H1 (cell line): ENCODE measurements at regions of chr20 and their contacts with region 1.

Region 1: DNA sequence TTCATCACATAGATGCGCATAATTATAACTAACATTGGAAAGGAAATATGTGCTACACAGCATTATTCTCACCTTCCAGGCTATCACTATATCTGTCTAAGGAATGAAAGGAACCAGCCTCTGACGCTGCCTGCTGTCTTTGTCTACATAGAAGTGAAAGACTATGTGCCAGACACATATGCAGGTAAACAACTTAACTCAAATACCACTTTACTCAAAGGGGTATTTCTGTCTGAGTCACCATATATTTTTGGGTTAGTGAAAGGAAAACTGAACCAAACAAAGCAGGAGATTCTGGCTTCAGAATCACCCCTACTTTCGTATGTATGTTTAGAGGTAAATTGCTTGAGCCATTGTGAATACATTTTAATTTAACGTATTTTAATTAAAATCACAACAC is 328.6 kb upstream of the PLCB4 start:
- DNase-seq: no peak
- H3K4me3 ChIP-seq: no peak overlapping the region
- H3K27ac ChIP-seq: no peak overlapping the region
- H3K4me1 ChIP-seq: no peaks in the 10 kb centered on the region
- H3K27me3 ChIP-seq: no peaks in the 10 kb centered on the region
- CTCF ChIP-seq: no peak
- EP300 ChIP-seq: no peak
- POLR2A ChIP-seq: no peak
- RAD21 ChIP-seq: no peak

Region 2: GRCh38 chr20:8571611-8572010 is 168.7 kb before region 1 on chr20:
- CTCF ChIA-PET with region 1: no interaction called
- POLR2A ChIA-PET with region 1: no interaction called
- DNase-seq: no peak
- H3K4me3 ChIP-seq: no peak overlapping the region
- H3K27ac ChIP-seq: no peak overlapping the region
- H3K4me1 ChIP-seq: no peaks in the 10 kb centered on the region
- H3K27me3 ChIP-seq: no peaks in the 10 kb centered on the region
- CTCF ChIP-seq: no peak
- EP300 ChIP-seq: no peak
- POLR2A ChIP-seq: no peak
- RAD21 ChIP-seq: no peak

Region 3: DNA sequence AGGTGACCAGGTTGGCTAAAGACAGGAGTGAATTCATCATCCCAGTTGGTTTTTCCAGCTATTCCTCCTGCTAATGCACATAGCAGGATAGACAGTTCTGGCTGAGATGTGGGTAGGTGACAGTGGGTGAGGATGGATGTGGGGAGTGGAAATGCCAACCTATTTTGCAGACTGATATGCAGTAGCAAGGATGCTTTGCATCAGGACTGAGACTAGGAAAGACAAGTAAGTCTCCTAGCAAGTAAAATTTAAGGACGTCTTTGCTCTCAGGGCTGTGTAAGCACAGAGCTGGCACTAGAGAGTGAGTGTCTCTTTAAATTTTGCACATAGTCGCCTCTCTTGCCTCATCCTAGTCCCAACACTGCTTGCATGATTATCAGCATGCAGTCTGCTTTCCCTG is 39.5 kb before region 1 on chr20:
- CTCF ChIA-PET with region 1: no interaction called
- POLR2A ChIA-PET with region 1: no interaction called
- DNase-seq: no peak
- H3K4me3 ChIP-seq: no peak overlapping the region
- H3K27ac ChIP-seq: no peak overlapping the region
- H3K4me1 ChIP-seq: no peaks in the 10 kb centered on the region
- H3K27me3 ChIP-seq: no peaks in the 10 kb centered on the region
- CTCF ChIP-seq: no peak
- EP300 ChIP-seq: no peak
- POLR2A ChIP-seq: no peak
- RAD21 ChIP-seq: no peak

Region 4: GRCh38 chr20:8756410-8756809 is 16.1 kb after region 1 on chr20:
- CTCF ChIA-PET with region 1: interaction called, 10 read pairs
- POLR2A ChIA-PET with region 1: no interaction called
- DNase-seq: no peak
- H3K4me3 ChIP-seq: no peak overlapping the region
- H3K27ac ChIP-seq: no peak overlapping the region
- H3K4me1 ChIP-seq: no peaks in the 10 kb centered on the region
- H3K27me3 ChIP-seq: no peaks in the 10 kb centered on the region
- CTCF ChIP-seq: no peak
- EP300 ChIP-seq: no peak
- POLR2A ChIP-seq: no peak
- RAD21 ChIP-seq: no peak